WTC11 (cell line): ENCODE measurements at regions of chr11 and their contacts with region 1.

Region 1: GRCh38 chr11:65180877-65181568 is 705 bp upstream of the CAPN1 start:
- DNase-seq: peak; percentile 86
- ATAC-seq: peak; percentile 60
- H3K4me3 Mint-ChIP-seq: peak overlapping the region; percentile 83
- H3K27ac Mint-ChIP-seq: peak overlapping the region; percentile 63; the same call in 1 of the 2 replicates
- H3K4me1 Mint-ChIP-seq: peaks cover 40% of the 10 kb centered on the region
- H3K27me3 Mint-ChIP-seq: no peaks in the 10 kb centered on the region
- CTCF ChIP-seq: peak; percentile 72

Region 2: DNA sequence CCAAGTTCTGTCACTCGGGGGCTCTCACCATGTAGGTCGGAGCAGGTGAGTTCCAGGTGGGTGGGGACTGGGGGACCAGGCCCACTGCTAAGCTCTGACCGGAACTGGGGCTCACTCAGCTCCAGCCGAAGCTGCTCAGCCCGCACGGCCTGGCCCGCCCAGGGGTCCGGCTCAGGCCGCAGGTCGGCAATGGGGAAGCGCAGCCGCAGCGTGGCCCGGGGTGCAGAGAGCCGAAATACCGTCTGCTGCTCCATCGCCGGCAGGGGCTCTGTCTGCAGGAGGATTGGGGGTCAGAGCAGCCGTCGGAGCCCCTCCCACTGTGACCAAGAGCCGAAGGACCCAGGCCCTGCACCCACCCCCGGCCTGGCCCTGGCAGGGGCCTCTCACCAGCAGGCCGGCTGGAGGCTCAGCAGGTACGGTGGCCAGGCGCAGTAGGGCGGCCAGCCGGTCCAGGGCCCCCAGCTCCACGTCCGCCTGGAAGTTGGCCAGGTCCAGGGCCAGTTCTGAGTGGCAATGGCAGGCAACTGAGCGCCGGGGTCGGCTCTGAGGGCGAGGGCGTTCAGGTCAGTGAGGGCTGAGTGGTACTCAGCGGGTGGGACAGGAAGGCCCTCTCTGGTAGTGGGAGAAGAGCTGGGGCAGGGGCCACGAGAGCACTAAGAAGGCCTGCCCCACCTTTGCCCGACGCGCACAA is 271.2 kb before region 1 on chr11:
- CTCF ChIA-PET with region 1: no interaction called
- POLR2A ChIA-PET with region 1: no interaction called
- DNase-seq: no peak
- ATAC-seq: no peak
- H3K4me3 Mint-ChIP-seq: no peak overlapping the region
- H3K27ac Mint-ChIP-seq: no peak overlapping the region
- H3K4me1 Mint-ChIP-seq: no peaks in the 10 kb centered on the region
- H3K27me3 Mint-ChIP-seq: no peaks in the 10 kb centered on the region
- CTCF ChIP-seq: no peak

Region 3: DNA sequence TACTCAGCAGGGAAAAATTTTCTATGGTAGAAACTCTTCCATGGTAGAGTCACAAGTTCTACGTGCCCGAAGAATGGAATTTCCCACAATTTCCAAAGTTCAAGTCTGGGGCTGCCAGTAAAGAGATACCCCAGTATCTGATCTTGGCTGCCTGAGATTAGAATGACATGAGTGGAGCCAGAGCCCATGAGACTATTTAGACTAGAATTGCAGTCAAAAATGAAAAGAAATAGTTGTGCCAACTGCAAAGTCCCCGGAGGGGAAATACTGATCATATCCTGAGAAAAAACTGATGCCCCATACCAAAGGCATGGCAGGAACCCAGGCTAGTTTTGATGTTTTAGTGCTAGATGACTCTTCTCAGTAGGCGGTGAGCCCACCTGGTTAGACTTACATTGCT is 220.3 kb before region 1 on chr11:
- CTCF ChIA-PET with region 1: no interaction called
- POLR2A ChIA-PET with region 1: no interaction called
- DNase-seq: no peak
- ATAC-seq: no peak
- H3K4me3 Mint-ChIP-seq: no peak overlapping the region
- H3K27ac Mint-ChIP-seq: no peak overlapping the region
- H3K4me1 Mint-ChIP-seq: no peaks in the 10 kb centered on the region
- H3K27me3 Mint-ChIP-seq: peaks cover 7% of the 10 kb centered on the region; the same call in 1 of the 2 replicates
- CTCF ChIP-seq: no peak

Region 4: DNA sequence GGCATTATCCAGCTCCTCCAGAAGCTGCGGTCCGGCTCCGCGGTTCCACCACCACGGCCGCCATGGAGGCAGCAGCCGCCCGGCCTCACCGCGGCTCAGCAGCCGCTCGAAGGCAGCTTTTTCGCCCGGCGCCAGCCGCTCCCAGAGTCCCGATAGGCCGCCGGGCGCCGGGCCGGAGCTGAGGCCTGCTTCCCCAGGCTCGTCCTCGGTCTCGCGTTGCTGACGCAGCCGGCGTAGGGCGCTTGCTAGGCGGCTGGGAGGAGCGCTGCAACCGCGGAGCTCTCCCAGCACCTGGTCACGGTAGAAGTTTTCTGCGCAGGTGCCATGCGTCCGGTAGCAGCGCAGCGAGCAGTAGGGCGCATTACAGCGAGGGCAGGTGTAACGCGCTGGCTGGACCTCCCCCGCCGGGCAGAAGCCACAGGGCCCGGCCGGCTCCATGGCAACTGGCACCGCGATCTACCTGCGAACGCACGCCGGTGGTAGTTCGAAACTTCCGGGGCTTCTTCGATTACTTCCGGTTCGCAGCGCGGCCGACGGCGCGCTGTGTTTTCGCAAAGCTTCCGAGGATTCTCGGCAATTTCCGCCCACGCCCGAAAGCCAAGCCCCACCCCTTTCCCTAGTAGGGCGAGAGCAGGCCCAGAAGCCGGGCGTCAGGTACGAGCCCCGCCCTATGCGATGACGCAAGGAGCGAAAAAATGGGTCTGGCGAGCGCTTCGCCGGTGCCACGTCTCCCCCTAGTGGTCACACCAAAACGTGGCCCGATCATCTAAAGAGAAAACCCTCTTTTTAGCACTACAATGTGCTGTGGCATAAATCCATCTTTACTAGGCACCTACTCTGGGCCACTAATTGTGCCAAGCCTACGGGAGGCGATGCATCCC is 63.6 kb before region 1 on chr11 and contains the start of gene ZNHIT2:
- CTCF ChIA-PET with region 1: interaction called, 53 read pairs
- POLR2A ChIA-PET with region 1: interaction called, 11 read pairs
- DNase-seq: peak; percentile 100
- ATAC-seq: peak; percentile 69
- H3K4me3 Mint-ChIP-seq: peak within 1 kb of the TSS; percentile 86
- H3K27ac Mint-ChIP-seq: peak within 1 kb of the TSS; percentile 100
- H3K4me1 Mint-ChIP-seq: peaks cover 22% of the 10 kb centered on the region
- H3K27me3 Mint-ChIP-seq: no peaks in the 10 kb centered on the region
- CTCF ChIP-seq: peak; percentile 91
- total RNA-seq, gene ZNHIT2: 15.9 to 18.3 TPM (median 16.7 TPM) in 3 replicates

Region 5: DNA sequence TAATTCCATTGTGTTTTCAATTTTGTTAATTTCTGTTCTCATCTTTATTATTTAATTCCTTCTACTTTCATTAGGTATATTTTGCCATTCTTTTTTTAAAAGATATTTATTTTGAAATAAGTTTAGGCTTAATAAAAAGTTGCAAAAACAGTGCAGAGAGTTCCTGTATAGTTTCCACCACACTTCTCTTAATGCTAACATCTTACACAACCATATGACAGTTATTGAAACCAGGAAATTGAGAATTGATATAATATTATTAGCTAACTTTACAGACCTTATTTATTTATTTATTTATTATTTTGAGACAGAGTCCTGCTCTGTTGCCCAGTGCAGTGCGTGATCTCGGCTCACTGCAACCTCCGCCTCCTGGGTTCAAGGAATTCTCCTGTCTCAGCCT is 24.8 kb before region 1 on chr11:
- CTCF ChIA-PET with region 1: no interaction called
- POLR2A ChIA-PET with region 1: no interaction called
- DNase-seq: no peak
- ATAC-seq: no peak
- H3K4me3 Mint-ChIP-seq: no peak overlapping the region
- H3K27ac Mint-ChIP-seq: no peak overlapping the region
- H3K4me1 Mint-ChIP-seq: no peaks in the 10 kb centered on the region
- H3K27me3 Mint-ChIP-seq: peaks cover 29% of the 10 kb centered on the region
- CTCF ChIP-seq: no peak

Region 6: GRCh38 chr11:65169164-65169641 is 11.8 kb before region 1 on chr11:
- CTCF ChIA-PET with region 1: interaction called, 18 read pairs
- POLR2A ChIA-PET with region 1: interaction called, 3 read pairs
- DNase-seq: no peak
- ATAC-seq: no peak; the same call in 1 of the 2 replicates
- H3K4me3 Mint-ChIP-seq: no peak overlapping the region
- H3K27ac Mint-ChIP-seq: peak overlapping the region; percentile 29
- H3K4me1 Mint-ChIP-seq: peaks cover 14% of the 10 kb centered on the region
- H3K27me3 Mint-ChIP-seq: no peaks in the 10 kb centered on the region
- CTCF ChIP-seq: no peak

Region 7: DNA sequence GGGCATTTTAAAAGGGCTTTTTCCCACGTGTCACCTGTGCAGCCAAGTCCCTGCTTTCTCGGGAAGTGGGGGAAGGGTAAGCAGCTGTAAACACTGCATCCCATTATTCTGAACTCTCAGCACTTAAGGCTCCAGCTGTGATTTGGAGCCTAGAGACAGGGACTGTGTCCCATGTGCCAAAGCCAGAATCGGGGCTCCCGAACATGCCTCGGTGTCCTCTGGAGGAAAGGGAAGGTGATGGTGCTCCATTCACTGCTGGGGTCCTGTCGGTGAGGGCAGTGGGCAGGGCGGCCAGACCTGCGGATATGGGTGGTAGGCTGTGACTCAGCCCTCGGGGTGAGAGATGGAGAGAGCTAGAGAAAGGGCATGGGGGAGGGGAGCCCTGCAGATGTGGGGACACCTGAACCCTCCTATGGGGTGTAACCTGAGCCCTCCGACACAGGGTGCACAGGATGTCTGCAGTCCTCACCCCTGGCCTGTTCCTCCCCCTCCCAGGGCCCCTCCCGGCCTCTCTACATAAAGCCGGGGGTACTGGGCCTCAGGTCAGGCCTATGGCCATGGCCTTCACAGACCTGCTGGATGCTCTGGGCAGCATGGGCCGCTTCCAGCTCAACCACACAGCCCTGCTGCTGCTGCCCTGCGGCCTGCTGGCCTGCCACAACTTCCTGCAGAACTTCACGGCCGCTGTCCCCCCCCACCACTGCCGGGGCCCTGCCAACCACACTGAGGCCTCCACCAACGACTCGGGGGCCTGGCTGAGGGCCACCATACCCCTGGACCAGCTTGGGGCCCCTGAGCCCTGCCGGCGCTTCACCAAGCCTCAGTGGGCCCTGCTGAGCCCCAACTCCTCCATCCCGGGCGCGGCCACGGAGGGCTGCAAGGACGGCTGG is 32.5 kb after region 1 on chr11:
- CTCF ChIA-PET with region 1: interaction called, 12 read pairs
- POLR2A ChIA-PET with region 1: interaction called, 4 read pairs
- DNase-seq: peak; percentile 84
- ATAC-seq: peak; percentile 85
- H3K4me3 Mint-ChIP-seq: peak overlapping the region; percentile 58
- H3K27ac Mint-ChIP-seq: peak overlapping the region; percentile 100
- H3K4me1 Mint-ChIP-seq: peaks cover 42% of the 10 kb centered on the region
- H3K27me3 Mint-ChIP-seq: no peaks in the 10 kb centered on the region
- CTCF ChIP-seq: no peak

Region 8: GRCh38 chr11:65251476-65251875 is 70.5 kb after region 1 on chr11:
- CTCF ChIA-PET with region 1: interaction called, 34 read pairs
- POLR2A ChIA-PET with region 1: interaction called, 3 read pairs
- DNase-seq: no peak
- ATAC-seq: no peak
- H3K4me3 Mint-ChIP-seq: no peak overlapping the region
- H3K27ac Mint-ChIP-seq: no peak overlapping the region
- H3K4me1 Mint-ChIP-seq: no peaks in the 10 kb centered on the region
- H3K27me3 Mint-ChIP-seq: no peaks in the 10 kb centered on the region
- CTCF ChIP-seq: no peak

Region 9: GRCh38 chr11:65329944-65330403 is 149.0 kb after region 1 on chr11:
- CTCF ChIA-PET with region 1: interaction called, 13 read pairs
- POLR2A ChIA-PET with region 1: no interaction called
- DNase-seq: peak; percentile 90
- ATAC-seq: peak; percentile 31
- H3K4me3 Mint-ChIP-seq: peak overlapping the region; percentile 31; the same call in 1 of the 2 replicates
- H3K27ac Mint-ChIP-seq: no peak overlapping the region
- H3K4me1 Mint-ChIP-seq: peaks cover 13% of the 10 kb centered on the region
- H3K27me3 Mint-ChIP-seq: peaks cover 5% of the 10 kb centered on the region
- CTCF ChIP-seq: peak; percentile 79